Activated T-helper 1 cell treated with anti-CD3 and anti-CD28 coated beads, Interleukin-12 subunit alpha, Interleukin-12 subunit beta, Interleukin-2, Interleukin-4 antibody, amounts not matched to agents 30 ng/mL and 10 ng/mL and 1 ng/mL, durations not matched to agents 14 hours and 24 hours and 36 hours (primary cell): ENCODE measurements at regions of chrX and their contacts with region 1.

Region 1: GRCh38 chrX:72349190-72349589 is 43.5 kb upstream of the CITED1 start:
- DNase-seq: peak; percentile 0
- H3K4me3 Mint-ChIP-seq: peak overlapping the region; percentile 59
- H3K27ac Mint-ChIP-seq: peak overlapping the region; percentile 82
- H3K4me1 Mint-ChIP-seq: peaks cover 25% of the 10 kb centered on the region
- H3K27me3 Mint-ChIP-seq: no peaks in the 10 kb centered on the region

Region 2: DNA sequence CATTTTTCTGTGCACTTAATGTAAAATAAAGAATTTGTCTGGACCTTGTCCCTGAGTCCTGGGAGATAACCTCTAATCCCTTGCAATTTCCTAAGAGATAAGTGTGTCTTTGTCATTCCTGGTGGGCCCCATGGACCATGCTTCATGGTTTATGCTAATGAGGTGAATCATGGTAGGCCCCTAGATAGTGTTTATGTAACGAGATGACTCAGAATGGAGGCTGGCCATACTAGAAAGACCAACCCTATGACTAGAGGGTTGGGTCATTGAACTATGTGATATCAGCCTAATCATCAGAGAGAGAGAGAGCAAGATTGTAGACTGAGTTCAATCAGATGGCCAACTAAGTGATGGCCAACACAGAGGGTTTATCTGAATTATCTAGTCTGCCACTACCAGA is 502.8 kb before region 1 on chrX:
- intact Hi-C with region 1: no loop called
- DNase-seq: no peak
- H3K4me3 Mint-ChIP-seq: no peak overlapping the region
- H3K27ac Mint-ChIP-seq: no peak overlapping the region
- H3K4me1 Mint-ChIP-seq: no peaks in the 10 kb centered on the region
- H3K27me3 Mint-ChIP-seq: peaks cover 2% of the 10 kb centered on the region

Region 3: DNA sequence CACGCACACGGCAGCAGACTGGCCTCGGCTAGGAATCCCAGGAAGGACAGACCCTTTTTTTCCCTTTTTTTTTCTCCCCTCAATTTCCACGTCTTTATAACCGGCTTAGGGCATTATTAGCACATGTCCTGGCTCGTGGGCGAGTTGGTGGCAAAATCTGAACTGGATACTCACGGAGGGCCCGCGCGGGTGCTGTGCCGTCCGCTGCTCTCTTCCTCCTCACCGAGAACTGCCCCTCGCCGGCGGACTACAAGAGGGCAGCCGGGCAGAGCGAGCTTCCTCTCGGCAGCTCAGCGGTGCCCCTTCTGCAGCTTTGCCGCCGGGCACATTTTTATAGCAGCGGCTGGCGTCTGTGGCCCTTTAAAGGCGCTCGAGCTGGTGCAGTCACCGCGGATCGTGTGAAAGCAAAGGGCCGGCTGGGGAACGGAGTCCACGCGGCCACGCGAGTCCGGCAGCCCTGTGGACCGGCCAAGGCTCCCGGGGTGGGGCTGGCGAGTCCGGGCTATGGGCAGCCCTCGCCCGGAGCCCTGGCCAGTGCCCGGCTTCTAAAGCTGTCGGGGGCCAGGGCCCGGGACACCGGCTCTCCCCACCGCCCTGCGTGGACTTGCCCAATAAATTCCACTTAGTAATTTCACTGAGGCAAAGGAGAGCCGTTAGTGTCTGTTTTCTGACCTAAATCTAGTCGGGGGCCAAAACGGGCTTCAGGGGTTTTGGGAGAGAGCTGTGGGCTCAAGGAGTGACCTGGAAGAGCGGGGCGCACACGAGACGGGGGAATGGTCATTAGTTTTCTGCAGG is 42.1 kb before region 1 on chrX:
- intact Hi-C with region 1: loop called (anchors 2 kb)
- DNase-seq: no peak
- H3K4me3 Mint-ChIP-seq: peak overlapping the region; percentile 83
- H3K27ac Mint-ChIP-seq: peak overlapping the region; percentile 44
- H3K4me1 Mint-ChIP-seq: peaks cover 24% of the 10 kb centered on the region
- H3K27me3 Mint-ChIP-seq: peaks cover 57% of the 10 kb centered on the region